PC-9 (cell line): ENCODE measurements at regions of chr11 and their contacts with region 1.

Region 1: DNA sequence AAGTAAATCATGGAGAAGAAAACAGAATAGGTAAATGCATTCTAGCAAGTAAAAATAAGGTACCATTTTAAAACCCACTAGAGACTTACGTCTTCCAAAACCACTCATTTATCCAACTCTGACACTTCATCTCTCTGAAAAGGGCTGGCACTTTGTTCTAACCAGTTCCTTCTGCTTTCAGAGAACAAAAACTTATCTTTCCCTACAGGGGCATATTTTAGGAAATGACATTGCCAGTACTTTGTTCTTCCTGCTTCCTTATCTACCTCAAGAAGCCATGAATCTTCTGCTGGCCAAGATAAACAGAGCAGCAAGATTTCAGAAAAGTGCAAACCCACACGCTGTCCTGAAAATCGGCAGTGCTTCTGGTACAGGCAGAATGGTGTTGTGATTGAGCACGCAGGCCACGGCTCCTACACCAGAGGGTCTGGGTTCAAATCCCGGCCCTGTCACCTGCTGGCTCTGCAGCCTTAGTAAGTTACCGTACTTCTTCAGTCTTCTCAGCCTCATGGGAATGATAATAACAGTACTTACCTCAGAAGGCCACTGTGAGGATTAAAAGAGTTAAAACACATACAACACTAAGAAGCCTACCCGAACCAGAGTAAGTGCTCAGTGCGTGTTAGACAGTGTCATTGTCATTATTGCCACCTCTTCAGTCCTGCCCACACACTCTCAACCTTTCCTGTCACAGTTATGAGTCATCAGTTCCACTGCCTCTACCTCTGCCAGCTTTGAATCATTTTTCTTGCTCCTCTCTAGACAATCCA is 11.0 kb downstream of the MPZL3 start:
- DNase-seq: peak; percentile 60 to 100
- H3K4me3 ChIP-seq: peak overlapping the region; percentile 35; the same call in 1 of the 2 replicates
- H3K27ac ChIP-seq: peak overlapping the region; percentile 83
- H3K4me1 ChIP-seq: peaks cover 54% of the 10 kb centered on the region
- H3K27me3 ChIP-seq: no peaks in the 10 kb centered on the region
- CTCF ChIP-seq: no peak

Region 2: GRCh38 chr11:118086913-118087768 is 154.0 kb before region 1 on chr11 and contains the start of gene SMIM35:
- CTCF ChIA-PET with region 1: interaction called, 10 read pairs
- POLR2A ChIA-PET with region 1: no interaction called
- intact Hi-C with region 1: no loop called
- DNase-seq: no peak
- H3K4me3 ChIP-seq: no peak within 1 kb of the TSS
- H3K27ac ChIP-seq: no peak within 1 kb of the TSS
- H3K4me1 ChIP-seq: peaks cover 21% of the 10 kb centered on the region
- H3K27me3 ChIP-seq: no peaks in the 10 kb centered on the region
- CTCF ChIP-seq: no peak
- total RNA-seq, gene SMIM35: not detected in 2 replicates

Region 3: GRCh38 chr11:118224511-118225188 is 16.5 kb before region 1 on chr11 and contains the start of gene JAML:
- CTCF ChIA-PET with region 1: no interaction called
- POLR2A ChIA-PET with region 1: no interaction called
- intact Hi-C with region 1: no loop called
- DNase-seq: no peak
- H3K4me3 ChIP-seq: no peak within 1 kb of the TSS
- H3K27ac ChIP-seq: no peak within 1 kb of the TSS
- H3K4me1 ChIP-seq: no peaks in the 10 kb centered on the region
- H3K27me3 ChIP-seq: no peaks in the 10 kb centered on the region
- CTCF ChIP-seq: no peak
- total RNA-seq, gene JAML: not detected in 2 replicates

Region 4: GRCh38 chr11:118251858-118252652 is 10.9 kb after region 1 on chr11 and contains the start of gene MPZL3:
- CTCF ChIA-PET with region 1: interaction called, 5 read pairs
- POLR2A ChIA-PET with region 1: interaction called, 3 read pairs
- intact Hi-C with region 1: loop called (anchors 1 kb)
- DNase-seq: peak; percentile 86 to 99
- H3K4me3 ChIP-seq: peak within 1 kb of the TSS; percentile 72
- H3K27ac ChIP-seq: peak within 1 kb of the TSS; percentile 88
- H3K4me1 ChIP-seq: peaks cover 32% of the 10 kb centered on the region
- H3K27me3 ChIP-seq: no peaks in the 10 kb centered on the region
- CTCF ChIP-seq: 0 out of 2 replicates have a peak, but pooled peaks have one; percentile 2
- total RNA-seq, gene MPZL3: 13.4 and 16.8 TPM in 2 replicates

Region 5: GRCh38 chr11:118277306-118277705 is 36.1 kb after region 1 on chr11:
- CTCF ChIA-PET with region 1: no interaction called
- POLR2A ChIA-PET with region 1: interaction called, 5 read pairs
- intact Hi-C with region 1: loop called (anchors 1 kb)
- DNase-seq: peak; percentile 65 to 99
- H3K4me3 ChIP-seq: no peak overlapping the region; the same call in 1 of the 2 replicates
- H3K27ac ChIP-seq: peak overlapping the region; percentile 80
- H3K4me1 ChIP-seq: peaks cover 47% of the 10 kb centered on the region
- H3K27me3 ChIP-seq: no peaks in the 10 kb centered on the region
- CTCF ChIP-seq: no peak